Activated CD4-positive, alpha-beta T cell treated with anti-CD3 and anti-CD28 coated beads, Interleukin-2, amount 10 ng/mL, durations not matched to agents 24 days and 14 days (primary cell): ENCODE measurements at regions of chr11 and their contacts with region 1.

Region 1: GRCh38 chr11:124070915-124071635 is 29.9 kb upstream of the OR10G7 start:
- DNase-seq: peak; percentile 88
- H3K4me3 Mint-ChIP-seq: peak overlapping the region; percentile 47
- H3K27ac Mint-ChIP-seq: no peak overlapping the region
- H3K4me1 Mint-ChIP-seq: peaks cover 16% of the 10 kb centered on the region
- H3K27me3 Mint-ChIP-seq: peaks cover 26% of the 10 kb centered on the region

Region 2: DNA sequence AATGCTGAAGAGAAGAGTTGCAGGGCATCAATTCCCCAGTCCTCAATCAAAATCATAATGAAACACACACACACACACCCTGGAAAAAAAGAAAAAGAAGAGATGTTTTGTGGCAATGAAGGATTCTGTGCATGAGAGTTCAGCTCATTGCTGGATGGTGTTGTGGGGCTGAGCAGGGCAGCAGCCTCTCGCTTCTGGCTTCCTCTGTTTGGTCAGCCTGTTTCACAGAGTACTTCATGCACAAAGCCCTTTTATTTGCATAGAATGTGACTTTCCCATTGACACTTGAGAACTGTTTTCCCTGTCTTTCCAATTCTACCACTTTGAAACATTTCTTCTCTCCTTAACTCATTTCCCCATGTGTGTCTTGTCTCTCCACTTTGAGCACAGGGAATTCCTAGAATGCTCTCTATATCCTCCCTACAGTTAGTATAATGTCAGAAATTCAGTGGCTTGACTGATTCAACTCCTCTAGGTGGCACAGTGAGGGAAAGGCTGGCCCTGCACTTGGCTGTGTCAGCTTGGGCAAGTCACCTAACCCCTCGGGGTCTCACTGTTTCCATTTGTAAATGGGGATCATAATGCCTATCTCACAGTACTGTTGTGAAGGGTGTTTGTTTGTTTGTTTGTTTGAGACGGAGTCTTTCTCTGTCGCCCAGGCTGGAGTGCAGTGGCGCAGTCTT is 1064.1 kb before region 1 on chr11:
- intact Hi-C with region 1: no loop called
- DNase-seq: no peak
- H3K4me3 Mint-ChIP-seq: no peak overlapping the region
- H3K27ac Mint-ChIP-seq: no peak overlapping the region
- H3K4me1 Mint-ChIP-seq: no peaks in the 10 kb centered on the region
- H3K27me3 Mint-ChIP-seq: peaks cover 10% of the 10 kb centered on the region

Region 3: GRCh38 chr11:123753110-123753509 is 318.0 kb before region 1 on chr11:
- intact Hi-C with region 1: loop called (anchors 10 kb)
- DNase-seq: no peak
- H3K4me3 Mint-ChIP-seq: peak overlapping the region; percentile 44
- H3K27ac Mint-ChIP-seq: peak overlapping the region; percentile 87
- H3K4me1 Mint-ChIP-seq: peaks cover 44% of the 10 kb centered on the region
- H3K27me3 Mint-ChIP-seq: peaks cover 28% of the 10 kb centered on the region

Region 4: DNA sequence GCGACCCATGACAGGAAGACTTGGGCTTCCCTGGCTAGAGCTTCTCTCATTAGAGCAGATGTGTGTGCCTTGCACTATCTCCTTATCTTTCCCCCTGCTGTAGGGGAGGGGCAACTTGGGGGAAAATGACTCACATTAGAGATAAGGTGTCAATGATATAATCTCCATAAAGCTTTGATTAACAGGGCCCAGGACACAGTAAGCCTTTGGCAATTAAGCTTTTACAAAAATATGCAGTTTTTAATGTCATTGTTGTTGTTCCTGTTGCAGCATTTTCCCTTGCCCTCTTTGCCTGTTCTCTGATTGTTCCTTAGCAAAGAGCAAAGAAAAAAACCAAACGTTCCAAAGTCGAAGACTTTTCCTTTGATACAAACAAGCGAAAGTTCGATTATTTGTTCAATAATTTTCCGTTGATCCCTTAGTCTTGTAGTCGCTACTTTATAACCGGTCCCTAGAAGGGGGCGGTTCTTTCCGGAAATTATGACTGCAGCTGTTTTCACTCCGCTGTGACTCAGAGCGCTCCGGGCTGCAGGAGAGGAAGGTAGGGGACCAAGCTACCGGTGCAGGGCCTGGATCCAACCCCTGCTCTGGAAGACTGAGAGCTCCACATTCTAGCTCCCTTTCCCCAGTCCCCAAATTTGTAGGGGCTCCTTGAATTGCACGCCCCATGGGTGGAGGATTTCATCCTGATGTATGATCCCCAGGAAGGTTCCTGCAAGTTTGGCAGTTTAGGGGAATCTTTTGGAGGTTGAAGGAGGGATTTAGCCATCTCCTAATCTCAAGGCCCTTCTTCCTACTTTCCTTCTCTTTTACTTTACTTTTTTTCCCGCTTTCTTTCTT is 44.1 kb after region 1 on chr11 and contains the start of gene VWA5A:
- intact Hi-C with region 1: loop called (anchors 1 kb)
- DNase-seq: peak; percentile 93
- H3K4me3 Mint-ChIP-seq: peak within 1 kb of the TSS; percentile 86
- H3K27ac Mint-ChIP-seq: peak within 1 kb of the TSS; percentile 86
- H3K4me1 Mint-ChIP-seq: peaks cover 24% of the 10 kb centered on the region
- H3K27me3 Mint-ChIP-seq: peaks cover 12% of the 10 kb centered on the region
- total RNA-seq, gene VWA5A: 6.5 and 6.8 TPM in 2 replicates

Region 5: DNA sequence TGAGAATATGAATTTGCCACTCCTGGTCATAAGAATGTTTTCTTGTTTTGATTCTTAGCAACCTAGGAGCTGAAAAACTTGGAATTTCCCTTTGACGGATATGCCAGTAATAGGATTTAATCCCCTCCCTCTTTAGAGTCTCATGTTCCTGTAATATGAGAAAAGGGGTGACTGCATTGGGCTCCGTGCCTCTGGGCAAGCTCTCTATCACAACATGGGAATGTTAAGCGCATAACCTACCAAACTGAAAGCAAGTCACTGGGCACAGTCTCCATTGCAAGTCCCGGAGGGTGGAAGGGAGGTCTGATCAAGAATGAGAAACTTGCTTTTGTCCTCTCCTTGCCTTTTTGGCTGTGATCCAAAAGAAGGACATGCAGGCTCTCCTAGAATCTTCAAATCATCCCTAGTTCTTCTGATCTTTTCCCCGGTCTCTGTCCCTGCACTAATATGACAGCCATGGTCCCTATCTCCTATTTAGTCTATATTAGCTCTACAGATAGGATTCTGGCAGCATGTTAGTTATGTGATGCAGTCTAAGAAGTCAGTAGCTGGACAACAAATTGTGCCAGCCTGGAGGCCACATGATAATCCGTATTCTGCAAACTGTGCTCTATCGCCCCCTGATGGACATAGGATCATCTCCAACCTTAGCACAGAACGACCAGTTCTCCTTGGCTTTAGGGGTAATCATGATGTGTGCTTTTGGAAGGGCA is 123.8 kb after region 1 on chr11:
- intact Hi-C with region 1: loop called (anchors 1 kb)
- DNase-seq: peak; percentile 85
- H3K4me3 Mint-ChIP-seq: no peak overlapping the region
- H3K27ac Mint-ChIP-seq: no peak overlapping the region
- H3K4me1 Mint-ChIP-seq: no peaks in the 10 kb centered on the region
- H3K27me3 Mint-ChIP-seq: peaks cover 15% of the 10 kb centered on the region

Region 6: DNA sequence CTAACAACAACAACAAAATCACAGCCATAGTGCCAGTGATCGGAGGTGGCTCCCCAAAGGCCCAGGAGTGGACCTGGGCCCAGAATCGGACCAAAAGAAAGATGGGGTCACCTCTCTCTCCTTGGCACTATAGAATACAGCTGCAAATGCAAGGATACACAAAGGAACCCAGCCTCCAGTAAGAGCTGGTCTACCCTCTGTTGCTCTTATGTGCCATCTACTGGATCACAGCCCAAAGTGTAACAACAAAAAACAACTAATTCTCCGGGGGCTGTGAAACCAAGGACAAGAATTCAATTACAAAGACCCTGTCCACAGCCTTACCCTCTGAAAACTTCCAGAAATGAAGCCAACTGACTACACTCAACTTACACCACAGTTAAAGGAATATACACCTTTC is 206.7 kb after region 1 on chr11:
- intact Hi-C with region 1: loop called (anchors 5 kb)
- DNase-seq: no peak
- H3K4me3 Mint-ChIP-seq: no peak overlapping the region
- H3K27ac Mint-ChIP-seq: no peak overlapping the region
- H3K4me1 Mint-ChIP-seq: peaks cover 5% of the 10 kb centered on the region
- H3K27me3 Mint-ChIP-seq: no peaks in the 10 kb centered on the region

Region 7: DNA sequence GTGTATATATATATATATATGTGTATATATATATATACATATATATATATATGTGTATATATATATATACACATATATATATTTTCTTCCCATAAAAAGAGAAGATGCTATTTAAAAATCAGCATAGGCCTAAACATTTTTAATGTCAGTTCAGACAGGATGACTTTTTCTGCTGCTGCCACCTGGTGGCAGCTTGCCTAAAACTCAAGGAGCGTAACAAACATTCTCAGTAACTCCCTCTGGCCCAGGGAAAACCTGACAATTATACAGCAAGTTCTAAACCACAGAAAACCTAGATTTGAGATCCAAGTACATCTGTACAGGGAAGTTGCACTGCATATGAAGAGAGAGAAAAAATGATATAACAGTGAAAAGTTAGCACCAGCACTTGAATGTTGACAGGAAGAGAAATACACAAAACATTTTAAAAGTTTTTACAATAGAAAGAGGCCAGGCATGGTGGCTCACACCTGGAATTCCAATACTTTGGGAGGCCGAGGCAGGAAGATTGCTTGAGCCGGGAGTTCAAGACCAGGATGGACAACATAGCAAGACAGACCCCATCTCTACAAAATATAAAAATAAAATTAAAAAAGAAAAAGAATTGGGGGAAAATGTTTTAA is 515.3 kb after region 1 on chr11:
- intact Hi-C with region 1: loop called (anchors 2 kb)
- DNase-seq: peak; percentile 81
- H3K4me3 Mint-ChIP-seq: no peak overlapping the region
- H3K27ac Mint-ChIP-seq: no peak overlapping the region
- H3K4me1 Mint-ChIP-seq: no peaks in the 10 kb centered on the region
- H3K27me3 Mint-ChIP-seq: peaks cover 8% of the 10 kb centered on the region